ENCODE measurements at regions of chr17 and their contacts with region 1.

Region 1: DNA sequence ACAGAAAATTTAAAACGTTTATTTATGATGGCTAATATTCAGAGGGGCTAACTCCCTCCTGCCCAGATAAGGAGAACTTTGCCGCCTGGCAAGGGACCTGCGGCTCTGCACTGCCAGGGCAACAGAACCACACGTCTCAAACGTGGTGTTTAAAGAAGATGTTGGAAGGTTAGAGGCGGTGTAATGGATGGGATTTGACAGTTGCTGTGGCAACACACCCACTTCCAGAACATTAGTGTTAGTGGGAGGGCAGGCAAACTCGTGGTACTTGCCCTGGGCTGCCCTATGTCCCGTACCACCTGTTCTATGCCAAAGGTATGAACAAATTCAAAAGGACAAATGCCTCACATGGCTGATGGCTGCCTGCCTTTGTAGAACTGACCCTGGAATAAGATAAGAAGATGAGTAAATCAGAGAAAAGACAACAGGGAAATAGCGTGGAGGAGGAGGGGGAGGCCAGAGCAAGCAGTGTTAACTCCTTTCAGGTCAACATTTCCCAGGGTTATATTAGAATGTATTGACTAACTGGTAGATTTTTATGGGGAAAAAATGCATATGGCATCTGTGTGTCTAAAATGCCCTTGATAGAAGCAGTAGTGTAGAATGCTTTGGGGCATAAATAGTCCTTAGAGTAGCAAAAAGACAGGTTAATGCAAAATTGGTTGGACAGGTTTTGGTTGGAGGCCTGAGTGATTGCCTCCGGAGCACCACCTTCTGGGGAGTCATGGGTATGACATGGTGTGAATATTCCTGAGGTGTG is 30.8 kb downstream of the HLF start:
- DNase-seq: peak; percentile 72
- ATAC-seq: peak; percentile 78
- H3K4me3 Mint-ChIP-seq: no peak overlapping the region
- H3K27ac Mint-ChIP-seq: no peak overlapping the region
- H3K4me1 Mint-ChIP-seq: no peaks in the 10 kb centered on the region
- H3K27me3 Mint-ChIP-seq: peaks cover 2% of the 10 kb centered on the region

Region 2: DNA sequence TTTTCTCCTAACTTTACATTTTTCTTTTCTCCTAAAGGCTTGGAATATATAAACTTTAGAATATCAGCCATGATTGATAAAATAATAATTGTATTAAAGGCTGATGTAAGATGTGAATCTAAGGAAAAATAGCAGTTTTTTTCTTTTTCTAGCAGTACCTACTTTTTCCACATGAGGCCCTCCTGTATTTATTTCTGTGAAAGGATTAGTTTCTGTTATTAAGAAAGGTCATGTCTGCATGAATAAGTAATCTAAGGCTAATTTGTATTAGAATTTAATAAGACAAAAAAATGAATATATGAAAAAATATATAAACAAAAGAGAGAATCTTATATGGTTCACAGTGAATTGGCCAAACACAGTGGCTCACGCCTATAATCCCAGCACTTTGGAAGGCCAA is 241.7 kb before region 1 on chr17:
- CTCF ChIA-PET with region 1: no interaction called
- POLR2A ChIA-PET with region 1: no interaction called
- intact Hi-C with region 1: loop called in 1 of 2 experiments (anchors 5 kb)
- DNase-seq: no peak
- ATAC-seq: no peak
- H3K4me3 Mint-ChIP-seq: no peak overlapping the region
- H3K27ac Mint-ChIP-seq: no peak overlapping the region
- H3K4me1 Mint-ChIP-seq: no peaks in the 10 kb centered on the region
- H3K27me3 Mint-ChIP-seq: no peaks in the 10 kb centered on the region

Measured in activated CD4-positive, alpha-beta T cell treated with anti-CD3 and anti-CD28 coated beads for 36 hours (primary cell).